Endothelial cell of umbilical vein (primary cell): ENCODE measurements at regions of chr7 and their contacts with region 1.

Region 1: DNA sequence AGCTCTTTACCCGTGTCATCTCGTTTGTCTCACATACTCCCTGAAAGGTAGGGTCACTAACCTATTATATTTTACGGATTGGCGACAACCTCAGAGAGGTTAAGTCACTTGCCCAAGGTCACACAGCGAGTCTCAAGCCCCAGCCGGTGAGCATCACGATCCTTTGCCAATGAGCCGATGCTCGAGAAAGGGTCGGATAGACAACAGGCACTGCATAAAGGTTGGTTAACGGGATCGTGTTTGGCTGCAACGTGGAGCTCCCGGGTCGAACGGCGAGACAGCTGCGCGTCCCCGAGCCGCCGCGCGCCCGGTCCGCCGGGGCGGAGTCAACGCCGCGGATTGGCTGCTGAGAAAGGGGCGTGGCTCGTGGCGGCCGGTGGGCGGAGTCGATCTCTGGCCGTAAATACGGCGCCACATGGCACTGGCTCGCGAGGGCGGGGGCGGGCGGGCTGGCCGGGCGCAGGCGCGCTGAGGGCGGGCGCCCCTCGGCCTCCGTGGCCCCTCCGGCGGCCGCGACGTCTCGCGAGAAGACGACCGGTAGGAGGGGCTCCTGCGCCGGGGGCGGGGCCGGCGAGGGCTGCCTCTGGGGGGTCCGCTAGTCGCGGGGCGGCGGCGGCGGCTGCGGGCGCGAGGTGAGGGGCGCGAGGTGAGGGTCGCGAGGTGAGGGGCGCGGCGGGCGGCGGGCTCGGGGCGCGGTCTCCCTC is at the start of gene CHST12:
- DNase-seq: peak; percentile 94
- H3K4me3 ChIP-seq: peak within 1 kb of the TSS; percentile 68 to 75 (median 68)
- H3K27ac ChIP-seq: no peak within 1 kb of the TSS
- H3K4me1 ChIP-seq: peaks cover 24% of the 10 kb centered on the region
- H3K27me3 ChIP-seq: no peaks in the 10 kb centered on the region
- CTCF ChIP-seq: no peak
- POLR2A ChIP-seq: peak; percentile 66
- total RNA-seq, gene CHST12: 28.8 and 30.2 TPM in 2 replicates

Region 2: DNA sequence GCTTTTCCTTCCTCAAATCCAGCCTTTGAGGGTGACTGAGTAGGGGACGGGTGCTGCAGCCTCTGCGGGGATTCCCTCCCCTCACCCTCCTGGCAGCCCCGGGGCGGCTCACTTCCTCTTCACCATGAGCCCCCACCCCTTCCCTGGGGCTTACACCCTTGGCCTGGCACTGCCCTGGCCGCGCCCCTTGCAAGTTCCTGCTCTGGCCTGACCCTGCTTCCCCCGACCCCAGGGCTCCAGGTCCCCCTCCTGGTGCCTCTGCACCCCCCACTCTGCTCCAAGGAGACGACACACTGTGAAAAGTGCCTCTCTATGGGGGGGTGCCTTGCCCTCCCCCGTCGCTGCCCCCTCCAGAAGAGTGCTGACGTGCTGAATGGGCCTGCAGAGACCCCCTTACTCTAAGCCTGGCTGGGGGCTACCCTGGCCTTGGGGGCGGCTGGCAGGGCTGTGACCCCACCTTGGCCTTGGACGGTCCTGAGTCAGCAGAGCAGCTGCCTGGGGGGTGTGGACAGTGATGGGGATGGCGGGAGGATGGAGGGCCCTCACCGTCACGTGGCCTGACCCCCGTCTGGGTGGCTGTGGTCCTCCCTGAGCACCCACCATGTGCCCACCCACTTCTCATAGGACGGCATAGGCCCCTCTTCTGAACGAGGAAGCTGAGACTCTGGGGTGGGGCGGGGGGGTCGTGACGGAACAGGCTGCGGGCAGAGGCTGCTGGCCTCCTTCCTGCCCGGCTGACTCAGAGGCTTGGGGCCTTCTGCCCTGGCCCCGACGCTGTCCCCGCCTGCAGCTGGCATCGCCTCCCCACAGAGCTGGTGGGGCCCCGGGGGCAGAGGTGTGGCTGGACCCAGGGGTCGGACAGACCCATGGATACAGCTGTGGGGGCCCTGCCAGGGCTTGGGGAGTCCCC is 126.2 kb after region 1 on chr7:
- CTCF ChIA-PET with region 1: no interaction called
- POLR2A ChIA-PET with region 1: no interaction called
- dilution Hi-C with region 1: no loop called
- intact Hi-C with region 1: loop called (anchors 10 kb)
- DNase-seq: peak; percentile 44
- H3K4me3 ChIP-seq: no peak overlapping the region
- H3K27ac ChIP-seq: peak overlapping the region; percentile 18
- H3K4me1 ChIP-seq: peaks cover 32% of the 10 kb centered on the region
- H3K27me3 ChIP-seq: no peaks in the 10 kb centered on the region
- CTCF ChIP-seq: no peak
- POLR2A ChIP-seq: no peak